ENCODE measurements at regions of chr6 and their contacts with region 1.

Region 1: DNA sequence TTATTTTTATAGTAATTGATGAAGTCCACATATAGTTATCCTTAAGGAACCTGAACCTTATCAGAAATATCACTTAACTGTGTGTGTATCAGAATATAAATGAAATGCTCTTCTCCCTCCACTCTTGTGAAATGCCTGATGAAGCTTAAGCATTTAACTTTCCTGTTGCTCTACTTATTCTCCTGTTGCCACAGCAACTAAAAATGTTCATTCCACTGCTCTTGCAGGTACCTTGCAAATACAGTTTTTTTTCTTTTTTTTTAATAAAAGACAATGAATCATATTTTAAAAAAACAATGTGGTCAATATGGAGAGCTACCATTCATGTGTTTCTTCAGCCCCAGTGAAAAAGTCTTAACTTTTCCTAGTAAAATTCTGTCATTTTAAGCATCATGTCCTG is 210.3 kb downstream of the RFPL4B start:
- DNase-seq: no peak
- ATAC-seq: no peak
- H3K4me3 ChIP-seq: no peak overlapping the region
- H3K27ac ChIP-seq: no peak overlapping the region
- H3K4me1 ChIP-seq: peaks cover 0 to 5% (median 0%) of the 10 kb centered on the region in 9 donors
- H3K27me3 ChIP-seq: no peaks in the 10 kb centered on the region
- CTCF ChIP-seq: no peak

Region 2: DNA sequence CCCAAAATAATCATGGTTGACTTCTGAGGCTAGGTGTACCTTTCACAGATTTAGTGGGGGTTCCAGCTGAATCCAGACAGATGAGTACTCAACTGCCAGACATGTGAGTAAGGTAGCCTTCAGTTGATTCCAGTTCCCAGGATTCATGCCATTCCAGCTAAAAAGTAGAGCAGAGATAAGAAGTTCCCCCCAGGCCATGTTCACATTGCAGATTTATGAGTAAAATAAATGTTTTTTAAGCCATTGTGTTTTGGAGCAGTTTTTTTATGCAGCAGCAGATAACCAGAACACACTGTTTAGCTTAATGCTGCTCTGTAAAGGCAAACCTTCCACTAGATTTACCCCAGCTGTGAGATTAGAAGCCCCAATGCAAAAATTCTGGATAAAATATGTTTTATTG is 34.7 kb after region 1 on chr6:
- intact Hi-C with region 1: loop called in 1 of 10 experiments (anchors 2 kb)
- DNase-seq: no peak
- ATAC-seq: no peak
- H3K4me3 ChIP-seq: no peak overlapping the region
- H3K27ac ChIP-seq: no peak overlapping the region
- H3K4me1 ChIP-seq: no peaks in the 10 kb centered on the region
- H3K27me3 ChIP-seq: no peaks in the 10 kb centered on the region
- CTCF ChIP-seq: no peak

Measured in heart right ventricle (tissue), 16 donors.